ENCODE measurements at regions of chr22 and their contacts with region 1.

Region 1: GRCh38 chr22:49917974-49918910 is at the starts of genes ALG12 and CRELD2:
- DNase-seq: peak; percentile 97 to 98
- ATAC-seq: peak; percentile 95 to 97
- H3K4me3 ChIP-seq: peak within 1 kb of the TSS; percentile 71 to 89 (median 76)
- H3K27ac ChIP-seq: peak within 1 kb of the TSS; percentile 83 to 98 (median 95)
- H3K4me1 ChIP-seq: peaks cover 13 to 19% of the 10 kb centered on the region in 2 donors
- H3K27me3 ChIP-seq: no peaks in the 10 kb centered on the region
- CTCF ChIP-seq: peak in 1 of 5 experiments; percentile 21
- POLR2A ChIP-seq: peak; percentile 82 to 91
- total RNA-seq, gene ALG12: 6.4 to 9.6 (median 8.2) TPM
- total RNA-seq, gene CRELD2: 8.9 to 15.0 (median 13.0) TPM

Region 2: DNA sequence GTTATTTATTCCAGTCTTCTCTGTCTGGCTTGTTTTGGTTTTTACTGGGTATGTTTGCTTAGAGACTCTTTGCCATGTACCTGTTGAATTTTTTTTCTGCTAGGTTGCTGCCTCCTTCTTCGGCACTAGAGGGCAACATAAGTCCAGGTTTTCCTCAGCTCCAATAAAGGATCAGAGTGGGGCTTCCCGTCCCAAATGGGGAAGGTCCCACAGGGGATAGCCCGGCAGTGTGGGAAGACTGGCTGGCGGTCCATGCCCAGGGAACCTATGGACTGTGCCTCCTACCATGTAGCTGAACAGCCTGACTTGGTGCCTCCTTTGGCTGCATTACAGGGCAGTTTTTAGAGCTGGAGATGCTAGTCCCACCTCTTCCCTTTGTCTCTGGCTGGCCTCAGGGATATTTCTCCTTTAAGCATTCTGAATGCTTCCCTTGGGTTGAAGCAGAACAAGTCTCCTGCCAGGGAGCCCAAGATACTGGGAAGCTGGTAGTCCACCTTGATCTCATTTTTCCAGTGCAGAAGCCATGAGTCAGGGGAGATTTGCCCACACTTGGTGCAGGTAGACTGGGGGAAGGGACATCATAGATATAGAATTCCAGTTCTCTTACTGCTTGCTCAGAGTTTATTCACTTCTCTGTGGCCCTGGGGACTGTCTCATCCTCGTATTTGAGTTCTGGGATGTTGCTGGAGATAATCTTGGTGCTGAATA is 150.7 kb before region 1 on chr22:
- in situ Hi-C with region 1: loop called in 1 of 4 experiments (anchors 10 kb)
- intact Hi-C with region 1: loop called (anchors 2 kb)
- DNase-seq: peak in 1 of 2 donors; percentile 25
- ATAC-seq: peak in 1 of 2 donors; percentile 50
- H3K4me3 ChIP-seq: no peak overlapping the region
- H3K27ac ChIP-seq: no peak overlapping the region
- H3K4me1 ChIP-seq: peaks cover 0 to 11% of the 10 kb centered on the region in 2 donors
- H3K27me3 ChIP-seq: no peaks in the 10 kb centered on the region
- CTCF ChIP-seq: peak; percentile 54 to 68 (median 66)
- POLR2A ChIP-seq: no peak

Region 3: GRCh38 chr22:49827853-49828598 is 90.2 kb before region 1 on chr22 and contains the start of gene BRD1:
- in situ Hi-C with region 1: no loop called
- intact Hi-C with region 1: loop called (anchors 1 kb)
- DNase-seq: peak in 1 of 2 donors; percentile 42
- ATAC-seq: peak; percentile 68 to 69
- H3K4me3 ChIP-seq: peak within 1 kb of the TSS; percentile 62 to 70 (median 65)
- H3K27ac ChIP-seq: peak within 1 kb of the TSS; percentile 75 to 90 (median 82)
- H3K4me1 ChIP-seq: peaks cover 19 to 27% of the 10 kb centered on the region in 2 donors
- H3K27me3 ChIP-seq: no peaks in the 10 kb centered on the region
- CTCF ChIP-seq: no peak
- POLR2A ChIP-seq: peak; percentile 20 to 21
- total RNA-seq, gene BRD1: 15.6 to 25.2 (median 18.1) TPM

Region 4: DNA sequence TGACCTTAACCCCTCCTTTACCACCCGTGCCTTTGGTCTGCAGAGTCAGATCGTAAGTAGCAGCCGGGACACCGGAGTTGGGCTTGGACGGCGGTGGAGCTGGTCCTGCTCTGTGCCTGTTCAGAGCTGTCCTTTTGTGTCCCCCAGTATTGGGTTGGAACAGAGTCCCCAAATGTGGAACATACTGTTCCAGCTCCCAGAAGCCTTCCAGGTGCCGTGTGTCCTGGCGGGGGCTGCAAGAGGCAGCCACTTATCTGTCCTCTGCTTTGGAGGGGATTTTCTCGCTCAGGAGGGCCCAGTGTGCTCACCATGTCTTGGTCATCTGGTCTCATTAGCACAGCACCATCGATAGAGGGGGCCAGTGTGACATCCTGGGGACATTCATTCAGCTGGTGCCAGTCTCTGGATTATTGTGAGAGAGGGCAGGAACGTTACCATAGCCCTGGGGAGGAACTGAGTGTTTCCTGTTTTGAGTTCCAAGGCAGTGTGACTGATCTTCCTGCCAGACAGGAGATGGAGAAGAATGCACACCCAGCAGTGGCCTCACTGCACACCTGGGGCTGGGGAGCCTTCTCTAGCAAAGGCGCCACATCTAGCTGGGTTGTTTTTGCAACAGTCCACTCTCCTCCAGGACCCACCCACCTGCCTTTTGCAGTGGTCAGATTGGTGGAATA is 12.6 kb after region 1 on chr22:
- in situ Hi-C with region 1: no loop called
- intact Hi-C with region 1: loop called (anchors 1 kb)
- DNase-seq: peak; percentile 80 to 86
- ATAC-seq: peak; percentile 50 to 77
- H3K4me3 ChIP-seq: no peak overlapping the region
- H3K27ac ChIP-seq: peak overlapping the region; percentile 64 to 99 (median 96)
- H3K4me1 ChIP-seq: peaks cover 42 to 48% of the 10 kb centered on the region in 2 donors
- H3K27me3 ChIP-seq: peaks cover 0 to 7% (median 4%) of the 10 kb centered on the region in 3 donors
- CTCF ChIP-seq: peak; percentile 31 to 77 (median 65)
- POLR2A ChIP-seq: no peak

Region 5: GRCh38 chr22:50341977-50342650 is 423.9 kb after region 1 on chr22:
- in situ Hi-C with region 1: no loop called
- intact Hi-C with region 1: loop called (anchors 1 kb)
- DNase-seq: peak; percentile 74 to 86
- ATAC-seq: peak; percentile 85 to 90
- H3K4me3 ChIP-seq: peak overlapping the region; percentile 69 to 88 (median 75)
- H3K27ac ChIP-seq: peak overlapping the region; percentile 71 to 92 (median 88)
- H3K4me1 ChIP-seq: peaks cover 9 to 18% of the 10 kb centered on the region in 2 donors
- H3K27me3 ChIP-seq: no peaks in the 10 kb centered on the region
- CTCF ChIP-seq: peak; percentile 89 to 98 (median 97)
- POLR2A ChIP-seq: no peak

Measured in gastrocnemius medialis (tissue), 4 donors.